ENCODE measurements at regions of chr10 and their contacts with region 1.

Region 1: GRCh38 chr10:123043409-123043925 is 34.7 kb downstream of the ACADSB start:
- DNase-seq: peak; percentile 59
- H3K4me3 Mint-ChIP-seq: no peak overlapping the region
- H3K27ac Mint-ChIP-seq: no peak overlapping the region
- H3K4me1 Mint-ChIP-seq: peaks cover 10% of the 10 kb centered on the region
- H3K27me3 Mint-ChIP-seq: no peaks in the 10 kb centered on the region

Region 2: GRCh38 chr10:123229927-123230632 is 186.6 kb after region 1 on chr10:
- CTCF ChIA-PET with region 1: no interaction called
- POLR2A ChIA-PET with region 1: no interaction called
- DNase-seq: no peak
- H3K4me3 Mint-ChIP-seq: no peak overlapping the region
- H3K27ac Mint-ChIP-seq: no peak overlapping the region
- H3K4me1 Mint-ChIP-seq: no peaks in the 10 kb centered on the region
- H3K27me3 Mint-ChIP-seq: no peaks in the 10 kb centered on the region

Region 3: DNA sequence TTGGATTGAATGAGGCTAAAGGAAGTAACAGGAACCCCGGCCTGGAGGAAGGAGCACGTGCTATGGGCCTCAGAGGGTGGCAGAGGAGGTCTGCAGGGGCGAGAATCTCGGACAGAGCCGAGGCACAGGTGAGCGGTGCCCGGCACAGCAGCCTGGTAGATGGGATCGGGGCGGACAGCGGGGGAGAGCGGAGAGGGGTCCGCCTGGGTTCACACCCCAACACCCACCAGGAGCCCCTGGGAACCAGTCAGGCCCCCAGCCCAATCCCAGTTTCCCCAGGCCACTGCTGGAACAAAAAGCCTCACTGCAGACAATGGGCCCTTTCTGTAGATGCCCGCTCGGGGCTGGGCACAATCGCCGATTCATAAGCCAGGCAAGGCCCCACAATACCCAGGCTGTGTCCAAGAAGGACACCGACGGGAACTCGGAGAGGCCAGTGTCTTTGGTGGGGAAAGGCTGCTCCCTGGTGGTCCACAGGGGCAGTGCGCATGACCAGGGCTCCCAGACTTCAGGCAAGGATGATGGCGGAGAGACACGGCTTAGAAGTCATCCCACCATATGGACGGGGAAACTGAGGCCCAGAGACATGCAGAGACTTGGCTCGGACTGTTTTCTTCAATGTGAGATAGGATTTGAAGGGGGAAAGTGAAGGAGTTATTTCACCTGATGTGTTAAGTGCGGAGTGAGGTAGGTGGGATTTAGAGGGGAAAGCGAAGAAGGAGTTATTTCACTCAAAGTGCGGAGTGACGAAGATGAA is 515.8 kb after region 1 on chr10:
- CTCF ChIA-PET with region 1: interaction called, 12 read pairs
- POLR2A ChIA-PET with region 1: no interaction called
- DNase-seq: peak; percentile 65
- H3K4me3 Mint-ChIP-seq: no peak overlapping the region
- H3K27ac Mint-ChIP-seq: no peak overlapping the region
- H3K4me1 Mint-ChIP-seq: no peaks in the 10 kb centered on the region
- H3K27me3 Mint-ChIP-seq: peaks cover 2% of the 10 kb centered on the region